ENCODE measurements at regions of chr7 and their contacts with region 1.

Region 1: DNA sequence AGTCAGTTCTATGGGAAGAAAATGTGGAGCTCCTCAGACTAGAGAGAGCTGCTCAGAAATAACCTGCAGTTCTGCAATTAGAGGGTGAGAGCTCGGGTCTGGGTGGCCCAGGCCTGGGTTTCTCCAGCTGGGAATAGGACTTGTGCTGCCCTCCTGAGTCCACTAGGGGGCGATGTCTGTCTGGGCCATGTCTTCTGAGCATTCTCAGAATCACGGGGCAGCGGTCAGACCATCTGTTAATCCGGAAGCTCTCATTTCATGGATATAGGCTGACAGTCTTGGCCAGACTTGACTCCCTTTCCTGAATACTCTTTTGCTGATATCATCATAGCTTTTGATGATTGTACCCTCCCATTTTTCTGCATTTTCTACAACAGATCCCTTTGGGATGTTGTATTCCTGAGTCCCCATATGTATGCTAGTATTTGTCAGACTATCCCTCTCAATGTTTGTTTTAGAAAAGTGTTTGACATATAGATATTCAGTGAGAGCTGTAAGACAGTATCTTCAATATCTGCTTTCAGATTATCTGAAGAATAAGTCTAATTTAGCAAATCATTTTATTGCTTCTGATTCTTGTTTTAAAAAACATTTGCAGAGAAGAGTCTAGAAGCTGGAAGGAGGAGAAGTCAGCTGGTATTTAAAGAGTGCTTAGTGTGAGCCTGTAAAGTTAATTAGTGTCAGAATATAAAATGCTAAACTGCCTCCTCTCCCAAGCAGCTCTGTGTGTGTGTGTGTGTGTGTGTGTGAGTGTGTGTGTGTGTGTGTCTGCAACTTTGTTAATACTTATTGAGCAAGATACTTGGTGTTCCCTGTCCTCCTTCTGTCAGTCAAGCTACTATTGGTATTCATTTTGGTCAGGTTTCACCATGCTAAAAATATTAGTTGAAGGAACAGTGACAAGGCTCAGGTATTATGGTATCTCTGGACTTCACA is 38.0 kb downstream of the STARD3NL start:
- DNase-seq: peak; percentile 36
- ATAC-seq: peak; percentile 99
- H3K4me3 ChIP-seq: no peak overlapping the region
- H3K27ac ChIP-seq: peak overlapping the region; percentile 14; the same call in 1 of the 2 replicates
- H3K4me1 ChIP-seq: no peaks in the 10 kb centered on the region
- H3K27me3 ChIP-seq: no peaks in the 10 kb centered on the region
- CTCF ChIP-seq: peak; percentile 94 to 99 (median 98)
- EP300 ChIP-seq: no peak
- POLR2A ChIP-seq: no peak
- RAD21 ChIP-seq: peak; percentile 84

Region 2: GRCh38 chr7:38141187-38141586 is 74.8 kb before region 1 on chr7:
- CTCF ChIA-PET with region 1: interaction called, 10 read pairs
- POLR2A ChIA-PET with region 1: no interaction called
- RAD21 ChIA-PET with region 1: interaction called, 3 read pairs
- SMC1A ChIA-PET with region 1: interaction called, 7 read pairs
- in situ Hi-C with region 1: no loop called
- intact Hi-C with region 1: no loop called
- DNase-seq: no peak
- ATAC-seq: no peak
- H3K4me3 ChIP-seq: no peak overlapping the region
- H3K27ac ChIP-seq: no peak overlapping the region
- H3K4me1 ChIP-seq: peaks cover 7% of the 10 kb centered on the region
- H3K27me3 ChIP-seq: no peaks in the 10 kb centered on the region
- CTCF ChIP-seq: no peak
- EP300 ChIP-seq: no peak
- POLR2A ChIP-seq: no peak
- RAD21 ChIP-seq: no peak

Region 3: GRCh38 chr7:38186593-38187314 is 29.2 kb before region 1 on chr7:
- CTCF ChIA-PET with region 1: interaction called, 114 read pairs
- POLR2A ChIA-PET with region 1: interaction called, 4 read pairs
- RAD21 ChIA-PET with region 1: interaction called, 38 read pairs
- SMC1A ChIA-PET with region 1: interaction called, 40 read pairs
- in situ Hi-C with region 1: no loop called
- intact Hi-C with region 1: no loop called
- DNase-seq: no peak
- ATAC-seq: peak; percentile 55
- H3K4me3 ChIP-seq: no peak overlapping the region
- H3K27ac ChIP-seq: no peak overlapping the region
- H3K4me1 ChIP-seq: peaks cover 39% of the 10 kb centered on the region
- H3K27me3 ChIP-seq: no peaks in the 10 kb centered on the region
- CTCF ChIP-seq: no peak
- EP300 ChIP-seq: no peak
- POLR2A ChIP-seq: no peak
- RAD21 ChIP-seq: no peak

Region 4: DNA sequence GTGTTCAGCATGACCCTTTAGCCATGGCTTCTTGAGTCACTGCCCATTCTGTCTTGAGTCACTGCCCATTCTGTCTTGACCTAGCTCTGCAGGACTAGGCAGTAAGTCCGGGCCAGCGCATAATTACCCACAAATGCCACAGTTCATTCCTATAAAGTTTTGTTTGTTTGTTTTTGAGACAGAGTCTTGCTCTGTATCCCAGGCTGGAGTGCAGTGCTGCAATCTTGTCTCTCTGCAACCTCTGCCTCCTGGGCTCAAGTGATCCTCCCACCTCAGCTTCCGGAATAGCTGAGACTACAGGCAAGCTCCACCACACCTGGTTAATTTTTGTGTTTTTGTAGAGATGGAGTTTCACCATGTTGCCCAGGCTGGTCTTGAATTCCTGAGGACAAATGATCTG is 90.2 kb after region 1 on chr7:
- CTCF ChIA-PET with region 1: interaction called, 430 read pairs
- POLR2A ChIA-PET with region 1: no interaction called
- RAD21 ChIA-PET with region 1: interaction called, 229 read pairs
- SMC1A ChIA-PET with region 1: interaction called, 9 read pairs
- in situ Hi-C with region 1: no loop called
- intact Hi-C with region 1: no loop called
- DNase-seq: no peak
- ATAC-seq: no peak
- H3K4me3 ChIP-seq: no peak overlapping the region
- H3K27ac ChIP-seq: no peak overlapping the region
- H3K4me1 ChIP-seq: peaks cover 13% of the 10 kb centered on the region
- H3K27me3 ChIP-seq: no peaks in the 10 kb centered on the region
- CTCF ChIP-seq: no peak
- EP300 ChIP-seq: no peak
- POLR2A ChIP-seq: no peak
- RAD21 ChIP-seq: no peak

Region 5: GRCh38 chr7:38351601-38352000 is 135.6 kb after region 1 on chr7:
- CTCF ChIA-PET with region 1: interaction called, 12 read pairs
- POLR2A ChIA-PET with region 1: no interaction called
- RAD21 ChIA-PET with region 1: interaction called, 5 read pairs
- SMC1A ChIA-PET with region 1: interaction called, 8 read pairs
- in situ Hi-C with region 1: loop called (anchors 25 kb)
- intact Hi-C with region 1: no loop called
- DNase-seq: no peak
- ATAC-seq: no peak
- H3K4me3 ChIP-seq: peak overlapping the region; percentile 16; the same call in 1 of the 2 replicates
- H3K27ac ChIP-seq: no peak overlapping the region
- H3K4me1 ChIP-seq: no peaks in the 10 kb centered on the region
- H3K27me3 ChIP-seq: no peaks in the 10 kb centered on the region
- CTCF ChIP-seq: no peak
- EP300 ChIP-seq: no peak
- POLR2A ChIP-seq: no peak
- RAD21 ChIP-seq: no peak